WTC11 (cell line): ENCODE measurements at regions of chr9 and their contacts with region 1.

Region 1: GRCh38 chr9:76269818-76270217 is 124.4 kb downstream of the RFK start:
- DNase-seq: no peak
- ATAC-seq: no peak
- H3K4me3 Mint-ChIP-seq: no peak overlapping the region
- H3K27ac Mint-ChIP-seq: no peak overlapping the region
- H3K4me1 Mint-ChIP-seq: 0 out of 2 replicates have a peak, but pooled peaks cover 2% of the 10 kb centered on the region
- H3K27me3 Mint-ChIP-seq: no peaks in the 10 kb centered on the region
- CTCF ChIP-seq: no peak

Region 2: GRCh38 chr9:76311586-76311985 is 41.8 kb after region 1 on chr9:
- CTCF ChIA-PET with region 1: no interaction called
- POLR2A ChIA-PET with region 1: no interaction called
- DNase-seq: no peak
- ATAC-seq: no peak
- H3K4me3 Mint-ChIP-seq: no peak overlapping the region
- H3K27ac Mint-ChIP-seq: no peak overlapping the region
- H3K4me1 Mint-ChIP-seq: peaks cover 7% of the 10 kb centered on the region
- H3K27me3 Mint-ChIP-seq: no peaks in the 10 kb centered on the region
- CTCF ChIP-seq: no peak

Region 3: DNA sequence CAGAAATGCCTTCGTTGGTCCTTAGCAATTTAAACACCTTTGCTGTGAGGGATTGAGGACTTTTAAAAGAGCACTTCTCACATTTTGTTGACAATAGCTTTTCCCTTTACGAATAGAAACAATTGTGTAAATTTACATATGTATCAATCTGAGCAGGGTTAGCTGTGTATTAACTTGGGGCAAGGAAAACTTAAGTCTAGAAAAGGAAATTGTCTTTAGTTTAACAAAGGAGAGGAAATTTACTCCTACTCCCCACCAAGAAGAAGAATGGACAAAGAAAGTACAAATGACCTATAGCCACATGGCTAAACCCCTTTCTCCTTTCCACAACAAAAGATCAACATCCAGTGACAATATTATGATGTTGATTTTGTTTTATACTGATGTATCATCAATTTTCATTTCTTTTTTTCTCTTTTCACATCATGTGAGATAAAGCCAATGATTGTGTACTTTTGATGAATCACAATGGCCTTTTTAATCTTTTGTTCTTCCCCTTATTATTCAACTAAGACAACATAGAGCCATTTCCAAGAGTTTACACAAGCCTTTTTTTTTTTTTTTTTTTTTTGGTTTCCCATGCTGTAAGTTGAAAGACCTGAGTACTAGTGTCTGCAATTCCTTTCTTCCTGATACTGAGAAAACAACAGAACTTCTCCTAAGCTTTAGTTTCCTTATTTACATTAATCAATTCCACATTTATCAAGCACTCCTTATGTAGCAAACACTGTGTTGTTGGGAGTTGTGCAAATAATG is 768.6 kb after region 1 on chr9:
- CTCF ChIA-PET with region 1: no interaction called
- POLR2A ChIA-PET with region 1: interaction called, 11 read pairs
- DNase-seq: no peak
- ATAC-seq: peak; percentile 79
- H3K4me3 Mint-ChIP-seq: no peak overlapping the region
- H3K27ac Mint-ChIP-seq: peak overlapping the region; percentile 88
- H3K4me1 Mint-ChIP-seq: peaks cover 44% of the 10 kb centered on the region
- H3K27me3 Mint-ChIP-seq: peaks cover 63% of the 10 kb centered on the region
- CTCF ChIP-seq: no peak